T-cell (primary cell): ENCODE measurements at regions of chr2 and their contacts with region 1.

Region 1: GRCh38 chr2:187500585-187501359 is 52.7 kb upstream of the CALCRL start:
- DNase-seq: no peak
- ATAC-seq: no peak
- H3K4me3 ChIP-seq: no peak overlapping the region
- H3K4me3 Mint-ChIP-seq: no peak overlapping the region
- H3K27ac ChIP-seq: no peak overlapping the region
- H3K27ac Mint-ChIP-seq: no peak overlapping the region
- H3K4me1 ChIP-seq: peaks cover 0 to 20% of the 10 kb centered on the region in 2 experiments
- H3K4me1 Mint-ChIP-seq: peaks cover 0 to 8% (median 6%) of the 10 kb centered on the region in 3 donors
- H3K27me3 ChIP-seq: no peaks in the 10 kb centered on the region
- H3K27me3 Mint-ChIP-seq: peaks cover 0 to 4% of the 10 kb centered on the region in 2 donors

Region 2: DNA sequence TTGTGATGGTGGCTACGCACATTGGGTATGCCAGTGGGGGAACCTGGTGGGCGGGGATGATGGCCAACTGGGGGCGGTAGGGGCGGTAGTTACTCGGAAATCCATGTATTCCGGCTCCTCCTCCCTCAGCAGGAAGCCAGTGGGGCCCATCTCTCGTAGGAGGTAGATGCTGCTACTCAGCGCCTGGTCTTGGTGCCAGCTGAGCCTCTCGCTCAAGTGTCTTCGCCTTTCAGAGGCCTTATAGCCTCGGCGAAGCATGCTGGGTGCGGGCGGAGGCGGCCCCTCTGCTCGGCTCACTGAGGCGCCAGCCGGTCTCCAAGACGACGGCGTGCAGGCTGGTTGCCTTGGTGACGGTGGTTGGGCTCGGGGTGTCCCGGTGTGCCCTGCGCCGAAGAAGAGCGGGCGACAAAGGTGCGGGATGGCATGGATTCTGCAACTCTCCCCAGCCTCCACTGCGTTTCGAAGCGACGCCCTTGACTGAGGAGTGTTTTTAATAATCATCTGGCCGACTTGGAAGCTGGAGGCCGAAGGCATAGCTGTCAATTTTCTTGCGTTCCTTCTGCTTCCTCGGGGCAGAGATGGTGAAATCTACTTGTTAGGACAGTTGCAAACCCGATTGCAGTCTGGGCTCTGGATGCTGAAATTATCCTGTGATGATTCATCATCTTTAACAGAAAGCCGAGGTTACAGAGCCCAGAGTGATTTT is 651.7 kb before region 1 on chr2 and contains the start of gene ZSWIM2:
- CTCF ChIA-PET with region 1: interaction called in 1 of 2 experiments, 10 read pairs
- POLR2A ChIA-PET with region 1: no interaction called
- DNase-seq: peak in 17 of 35 experiments; percentile 0 to 12 (median 1)
- ATAC-seq: peak; percentile 12 to 60 (median 22)
- H3K4me3 ChIP-seq: peak within 1 kb of the TSS; percentile 1 to 73
- H3K4me3 Mint-ChIP-seq: peak within 1 kb of the TSS; percentile 9 to 68 (median 43)
- H3K27ac ChIP-seq: no peak within 1 kb of the TSS
- H3K27ac Mint-ChIP-seq: no peak within 1 kb of the TSS
- H3K4me1 ChIP-seq: peaks cover 0 to 9% of the 10 kb centered on the region in 2 experiments
- H3K4me1 Mint-ChIP-seq: peaks cover 8 to 13% (median 13%) of the 10 kb centered on the region in 3 donors
- H3K27me3 ChIP-seq: peaks cover 0 to 9% of the 10 kb centered on the region in 2 experiments
- H3K27me3 Mint-ChIP-seq: peaks cover 14 to 26% of the 10 kb centered on the region in 2 donors
- total RNA-seq, gene ZSWIM2: not detected

Region 3: GRCh38 chr2:187383043-187383800 is 117.5 kb before region 1 on chr2:
- CTCF ChIA-PET with region 1: no interaction called
- POLR2A ChIA-PET with region 1: no interaction called
- DNase-seq: no peak
- ATAC-seq: no peak
- H3K4me3 ChIP-seq: no peak overlapping the region
- H3K4me3 Mint-ChIP-seq: no peak overlapping the region
- H3K27ac ChIP-seq: no peak overlapping the region
- H3K27ac Mint-ChIP-seq: no peak overlapping the region
- H3K4me1 ChIP-seq: no peaks in the 10 kb centered on the region
- H3K4me1 Mint-ChIP-seq: no peaks in the 10 kb centered on the region
- H3K27me3 ChIP-seq: no peaks in the 10 kb centered on the region
- H3K27me3 Mint-ChIP-seq: no peaks in the 10 kb centered on the region